ENCODE measurements at regions of chr5 and their contacts with region 1.

Region 1: GRCh38 chr5:37133939-37134338 is 115.2 kb downstream of the CPLANE1 start:
- DNase-seq: no peak
- ATAC-seq: no peak
- H3K4me3 ChIP-seq: no peak overlapping the region
- H3K4me3 Mint-ChIP-seq: no peak overlapping the region
- H3K27ac ChIP-seq: no peak overlapping the region
- H3K27ac Mint-ChIP-seq: no peak overlapping the region
- H3K4me1 ChIP-seq: no peaks in the 10 kb centered on the region
- H3K4me1 Mint-ChIP-seq: no peaks in the 10 kb centered on the region
- H3K27me3 ChIP-seq: no peaks in the 10 kb centered on the region
- H3K27me3 Mint-ChIP-seq: no peaks in the 10 kb centered on the region
- CTCF ChIP-seq: no peak

Region 2: DNA sequence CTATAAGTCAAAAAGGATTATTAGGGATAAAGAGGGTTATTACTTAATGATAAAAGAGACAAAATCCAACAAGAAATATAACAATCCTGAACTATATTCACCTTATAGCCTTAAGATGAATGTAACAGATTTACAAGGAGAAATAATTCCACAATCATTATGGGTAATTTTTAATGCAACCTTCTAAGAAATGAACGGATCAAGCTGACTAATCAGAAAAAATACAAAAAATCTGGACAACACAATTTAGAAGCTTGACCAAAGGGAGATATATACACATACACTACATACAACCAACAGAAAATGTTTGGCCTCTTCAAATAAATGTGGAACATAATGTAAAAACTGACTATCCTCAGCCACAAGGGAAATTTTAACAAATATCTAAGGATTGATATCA is 13.0 kb after region 1 on chr5:
- CTCF ChIA-PET with region 1: no interaction called
- POLR2A ChIA-PET with region 1: no interaction called
- intact Hi-C with region 1: no loop called
- DNase-seq: no peak
- ATAC-seq: no peak
- H3K4me3 ChIP-seq: no peak overlapping the region
- H3K4me3 Mint-ChIP-seq: no peak overlapping the region
- H3K27ac ChIP-seq: no peak overlapping the region
- H3K27ac Mint-ChIP-seq: no peak overlapping the region
- H3K4me1 ChIP-seq: no peaks in the 10 kb centered on the region
- H3K4me1 Mint-ChIP-seq: no peaks in the 10 kb centered on the region
- H3K27me3 ChIP-seq: no peaks in the 10 kb centered on the region
- H3K27me3 Mint-ChIP-seq: no peaks in the 10 kb centered on the region
- CTCF ChIP-seq: no peak

Region 3: GRCh38 chr5:37184748-37185364 is 50.9 kb after region 1 on chr5:
- CTCF ChIA-PET with region 1: no interaction called
- POLR2A ChIA-PET with region 1: no interaction called
- intact Hi-C with region 1: loop called in 1 of 2 experiments (anchors 10 kb)
- DNase-seq: peak in 1 of 9 experiments; percentile 4
- ATAC-seq: no peak
- H3K4me3 ChIP-seq: no peak overlapping the region
- H3K4me3 Mint-ChIP-seq: no peak overlapping the region
- H3K27ac ChIP-seq: no peak overlapping the region
- H3K27ac Mint-ChIP-seq: no peak overlapping the region
- H3K4me1 ChIP-seq: no peaks in the 10 kb centered on the region
- H3K4me1 Mint-ChIP-seq: no peaks in the 10 kb centered on the region
- H3K27me3 ChIP-seq: no peaks in the 10 kb centered on the region
- H3K27me3 Mint-ChIP-seq: no peaks in the 10 kb centered on the region
- CTCF ChIP-seq: no peak

Measured in CD8-positive, alpha-beta T cell (primary cell).